Spleen (tissue), 13 donors: ENCODE measurements at regions of chr3 and their contacts with region 1.

Region 1: DNA sequence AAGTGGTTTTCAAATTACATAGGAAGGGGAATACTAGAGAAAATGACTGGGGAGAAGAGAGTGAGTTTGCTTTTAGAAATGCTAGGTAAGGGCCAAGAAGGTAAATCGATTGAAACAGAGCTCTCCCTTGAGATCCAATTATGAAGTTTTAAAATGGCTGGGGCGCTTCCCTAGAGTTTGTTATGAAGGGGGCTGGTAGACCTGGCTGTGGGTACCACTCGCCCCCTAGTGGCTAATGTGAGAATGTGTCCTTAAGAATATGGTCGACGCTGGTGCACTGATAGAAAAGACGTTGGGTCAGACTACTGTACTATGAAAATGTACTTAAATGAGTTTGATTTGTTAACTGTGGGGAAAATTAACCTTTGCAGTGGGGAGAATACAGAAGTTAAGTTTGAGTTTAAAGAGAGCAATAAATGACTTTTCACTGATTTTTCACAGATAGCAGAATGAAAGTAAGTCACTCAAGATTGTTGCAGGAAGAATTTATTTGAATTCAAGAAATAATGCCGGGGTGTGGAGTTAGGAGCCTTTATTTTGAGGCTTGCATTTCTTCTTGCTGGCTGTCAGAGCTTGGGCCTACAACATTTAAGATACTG is 9.2 kb downstream of the TMPRSS7 start:
- DNase-seq: no peak
- H3K4me3 ChIP-seq: peak overlapping the region in 1 of 8 donors; percentile 35
- H3K27ac ChIP-seq: no peak overlapping the region
- H3K4me1 ChIP-seq: peaks cover 0 to 9% (median 8%) of the 10 kb centered on the region in 6 donors
- H3K27me3 ChIP-seq: no peaks in the 10 kb centered on the region
- CTCF ChIP-seq: peak; percentile 47 to 86 (median 77)
- POLR2A ChIP-seq: no peak

Region 2: GRCh38 chr3:111998636-111999483 is 44.8 kb before region 1 on chr3 and contains the start of gene TAGLN3:
- intact Hi-C with region 1: loop called (anchors 10 kb)
- DNase-seq: no peak
- H3K4me3 ChIP-seq: peak within 1 kb of the TSS in 6 of 8 donors; percentile 1 to 58 (median 22)
- H3K27ac ChIP-seq: no peak within 1 kb of the TSS
- H3K4me1 ChIP-seq: peaks cover 0 to 21% (median 14%) of the 10 kb centered on the region in 6 donors
- H3K27me3 ChIP-seq: peaks cover 0 to 28% (median 18%) of the 10 kb centered on the region in 7 donors
- CTCF ChIP-seq: no peak
- POLR2A ChIP-seq: no peak
- total RNA-seq, gene TAGLN3: not detected

Region 3: DNA sequence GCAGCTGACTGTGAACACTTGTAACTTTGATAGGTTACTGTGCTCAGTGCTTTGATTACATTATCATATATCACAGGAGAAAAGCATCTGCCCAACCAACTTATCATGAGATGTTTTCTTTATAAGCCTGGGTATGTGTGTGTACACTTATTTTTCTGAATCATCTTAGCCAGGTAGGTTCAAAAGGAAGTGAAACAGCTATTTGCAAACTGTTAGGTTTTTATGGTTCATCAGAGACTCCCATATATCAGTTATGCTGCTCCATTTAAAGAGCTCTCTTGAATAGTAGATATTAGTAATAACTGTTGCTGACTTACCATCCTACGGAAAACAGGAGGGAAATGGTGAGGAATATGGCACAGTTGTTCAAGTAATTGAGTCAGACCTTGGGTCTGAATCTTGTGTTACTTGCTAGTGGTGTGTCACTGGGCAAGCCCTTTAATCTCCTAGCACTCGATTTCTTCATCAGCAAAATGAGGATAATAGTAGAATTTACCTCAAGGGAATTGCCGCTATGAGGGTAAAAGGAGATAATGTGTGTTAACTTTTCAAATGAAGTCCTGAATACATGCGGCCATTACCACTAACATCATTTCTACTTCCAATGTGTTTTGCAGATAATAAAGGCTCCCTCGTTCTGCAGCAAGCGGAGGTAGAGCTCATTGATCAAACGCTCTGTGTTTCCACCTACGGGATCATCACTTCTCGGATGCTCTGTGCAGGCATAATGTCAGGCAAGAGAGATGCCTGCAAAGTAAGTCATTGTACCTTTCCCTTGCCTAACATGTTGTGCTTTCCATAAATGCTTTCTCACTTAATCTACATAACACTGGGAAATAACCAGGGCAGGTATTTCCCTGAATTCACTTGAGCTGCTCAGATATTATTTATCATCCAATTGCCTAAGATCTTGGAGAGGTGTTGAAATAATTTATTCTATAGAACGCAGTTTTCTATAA is 34.7 kb after region 1 on chr3:
- intact Hi-C with region 1: no loop called
- DNase-seq: no peak
- H3K4me3 ChIP-seq: no peak overlapping the region
- H3K27ac ChIP-seq: no peak overlapping the region
- H3K4me1 ChIP-seq: no peaks in the 10 kb centered on the region
- H3K27me3 ChIP-seq: peaks cover 0 to 14% (median 0%) of the 10 kb centered on the region in 7 donors
- CTCF ChIP-seq: no peak
- POLR2A ChIP-seq: no peak